ENCODE measurements at regions of chr14 and their contacts with region 1.

Region 1: DNA sequence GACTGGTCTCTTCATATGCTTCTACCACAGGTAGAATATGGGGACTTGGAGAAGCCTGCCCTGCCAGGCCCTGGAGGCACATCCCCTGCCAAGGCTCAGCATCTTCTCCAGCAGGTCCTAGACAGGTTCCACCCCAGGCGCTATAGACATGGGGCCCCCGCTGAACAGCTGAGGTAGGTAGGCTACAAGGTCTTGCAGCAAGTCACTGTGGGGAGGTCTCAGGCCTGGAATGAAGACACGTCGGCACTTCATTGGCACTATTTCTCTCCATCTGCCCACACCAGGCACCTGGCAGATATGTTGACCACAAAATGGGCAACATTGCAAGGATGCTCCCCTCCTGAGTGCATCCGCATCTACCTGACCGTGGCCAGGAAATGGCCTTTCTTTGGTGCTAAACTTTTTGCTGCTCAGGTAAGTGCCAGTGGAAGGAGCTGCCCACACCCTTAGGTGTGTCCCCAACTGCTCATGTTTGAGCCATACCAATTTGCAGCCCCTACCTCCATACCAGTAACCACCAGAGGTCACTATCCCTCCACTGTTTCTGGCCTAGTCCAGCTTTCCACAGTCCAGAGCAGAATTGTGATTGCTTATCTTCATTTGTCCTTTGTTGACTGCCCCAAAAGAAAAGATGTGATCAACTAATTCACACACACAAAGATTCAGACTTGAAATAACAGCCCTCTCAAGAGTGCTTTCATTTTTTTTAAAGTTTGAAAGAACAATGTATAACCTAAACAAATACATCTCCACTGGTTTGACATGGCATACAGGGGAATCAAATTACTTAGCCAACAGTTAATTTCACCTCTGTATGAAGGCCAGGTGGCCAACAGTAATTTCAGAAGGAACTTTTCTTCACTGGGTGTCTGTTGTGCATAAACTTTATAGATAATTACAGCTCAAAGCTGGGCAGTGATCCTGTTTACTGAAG is 16.1 kb downstream of the PIGH start:
- DNase-seq: peak in 4 of 9 experiments; percentile 26 to 61 (median 40)
- ATAC-seq: peak; percentile 61
- H3K4me3 ChIP-seq: no peak overlapping the region
- H3K4me3 Mint-ChIP-seq: no peak overlapping the region
- H3K27ac ChIP-seq: no peak overlapping the region
- H3K27ac Mint-ChIP-seq: no peak overlapping the region
- H3K4me1 ChIP-seq: no peaks in the 10 kb centered on the region
- H3K4me1 Mint-ChIP-seq: no peaks in the 10 kb centered on the region
- H3K27me3 ChIP-seq: no peaks in the 10 kb centered on the region
- H3K27me3 Mint-ChIP-seq: no peaks in the 10 kb centered on the region
- CTCF ChIP-seq: peak; percentile 51

Region 2: DNA sequence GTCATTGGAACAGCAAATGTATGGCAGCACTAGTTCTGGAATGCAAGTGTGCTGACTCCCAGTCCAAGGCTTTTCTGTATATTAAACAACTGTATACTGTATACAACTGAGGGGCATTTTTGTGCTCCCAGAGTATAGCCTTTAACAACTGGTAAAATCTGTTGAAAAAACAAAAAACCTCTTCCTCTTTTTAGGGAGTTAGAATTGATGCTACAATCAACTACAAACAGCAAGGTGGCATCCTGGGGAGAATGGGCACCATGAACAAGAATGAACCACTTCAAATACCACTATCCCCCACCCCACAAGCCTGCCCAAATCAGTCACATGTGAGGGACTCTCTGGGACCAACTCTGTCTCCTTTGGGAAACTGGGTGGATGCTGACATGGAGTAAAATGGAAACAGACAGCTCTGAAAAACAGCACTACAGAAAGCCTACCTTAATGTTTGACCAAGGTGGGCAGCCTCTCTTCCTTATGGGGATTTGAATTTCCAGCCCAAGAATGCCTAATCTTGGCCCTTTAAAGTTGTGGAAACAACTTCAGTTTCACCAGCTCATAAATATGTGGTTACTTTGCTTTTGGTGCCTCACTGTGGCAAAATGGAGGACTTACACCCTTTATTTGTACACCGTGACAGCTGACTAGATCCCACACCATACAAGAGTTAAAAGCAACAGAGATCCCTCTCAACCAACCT is 82.9 kb after region 1 on chr14:
- CTCF ChIA-PET with region 1: interaction called, 12 read pairs
- POLR2A ChIA-PET with region 1: no interaction called
- intact Hi-C with region 1: loop called (anchors 1 kb)
- DNase-seq: peak in 4 of 9 experiments; percentile 26 to 76 (median 46)
- ATAC-seq: peak; percentile 91
- H3K4me3 ChIP-seq: no peak overlapping the region
- H3K4me3 Mint-ChIP-seq: no peak overlapping the region
- H3K27ac ChIP-seq: peak overlapping the region in 1 of 2 experiments; percentile 21
- H3K27ac Mint-ChIP-seq: no peak overlapping the region
- H3K4me1 ChIP-seq: peaks cover 25% of the 10 kb centered on the region
- H3K4me1 Mint-ChIP-seq: peaks cover 60% of the 10 kb centered on the region
- H3K27me3 ChIP-seq: no peaks in the 10 kb centered on the region
- H3K27me3 Mint-ChIP-seq: no peaks in the 10 kb centered on the region
- CTCF ChIP-seq: peak; percentile 61

Measured in CD8-positive, alpha-beta T cell (primary cell).